ENCODE measurements at regions of chr18 and their contacts with region 1.

Region 1: DNA sequence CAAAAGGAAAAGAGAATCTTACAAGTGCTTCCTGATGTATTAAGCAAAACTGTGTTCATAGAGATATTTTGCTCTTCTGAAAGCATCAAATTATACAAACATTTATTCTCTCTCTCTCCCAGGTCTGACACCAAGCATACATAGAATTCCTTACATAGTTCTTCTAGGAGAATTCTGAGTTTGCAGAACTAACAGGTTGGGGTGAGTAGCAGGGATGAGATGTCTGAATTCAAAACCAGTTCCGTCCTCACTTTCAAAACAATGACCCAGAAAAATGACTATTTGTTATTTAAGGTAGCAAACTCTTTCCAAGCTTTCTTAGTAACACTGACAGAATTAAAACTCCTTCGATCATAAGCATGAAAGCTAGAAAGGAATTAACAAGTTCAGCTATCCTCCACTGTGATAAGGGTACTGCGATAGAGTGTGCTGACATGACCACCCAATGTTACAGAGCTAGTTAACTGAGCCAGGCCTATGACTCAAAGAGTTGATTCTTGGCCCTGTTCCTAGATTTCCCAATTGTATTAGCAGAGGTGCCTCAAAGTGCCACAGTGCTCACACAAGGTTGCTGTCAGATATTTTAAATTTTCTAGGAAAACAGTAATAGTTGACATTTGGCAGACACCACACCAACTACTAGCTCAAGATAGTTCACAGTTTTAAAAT is 85.8 kb upstream of the SETBP1 start:
- DNase-seq: no peak
- H3K4me3 ChIP-seq: no peak overlapping the region
- H3K27ac ChIP-seq: peak overlapping the region in 1 of 2 donors; percentile 52
- H3K4me1 ChIP-seq: peaks cover 4 to 59% of the 10 kb centered on the region in 2 donors
- H3K27me3 ChIP-seq: no peaks in the 10 kb centered on the region
- CTCF ChIP-seq: no peak

Region 2: DNA sequence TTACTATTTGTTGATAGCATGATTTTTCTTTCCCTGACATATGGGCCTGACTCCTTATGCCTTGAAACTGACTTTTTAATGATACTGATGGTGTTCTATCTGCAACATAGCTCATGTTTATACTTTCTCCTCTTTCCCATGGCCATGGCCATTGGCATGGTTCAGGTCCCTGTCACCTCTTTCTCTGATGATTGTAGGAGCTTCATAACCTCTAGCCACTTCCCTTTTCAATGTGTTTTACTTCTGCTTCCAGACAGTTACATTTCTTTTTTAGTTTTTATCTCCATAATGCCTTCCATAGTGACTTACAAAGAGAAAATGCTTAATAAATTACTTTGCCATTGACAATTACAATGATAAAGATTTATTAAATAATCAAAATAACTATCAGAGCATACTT is 92.1 kb before region 1 on chr18:
- intact Hi-C with region 1: no loop called
- DNase-seq: no peak
- H3K4me3 ChIP-seq: no peak overlapping the region
- H3K27ac ChIP-seq: no peak overlapping the region
- H3K4me1 ChIP-seq: no peaks in the 10 kb centered on the region
- H3K27me3 ChIP-seq: no peaks in the 10 kb centered on the region
- CTCF ChIP-seq: no peak

Region 3: GRCh38 chr18:44537521-44537920 is 57.4 kb before region 1 on chr18:
- intact Hi-C with region 1: loop called (anchors 5 kb)
- DNase-seq: peak in 1 of 2 donors; percentile 72
- H3K4me3 ChIP-seq: no peak overlapping the region
- H3K27ac ChIP-seq: no peak overlapping the region
- H3K4me1 ChIP-seq: peaks cover 0 to 6% of the 10 kb centered on the region in 2 donors
- H3K27me3 ChIP-seq: no peaks in the 10 kb centered on the region
- CTCF ChIP-seq: no peak

Region 4: DNA sequence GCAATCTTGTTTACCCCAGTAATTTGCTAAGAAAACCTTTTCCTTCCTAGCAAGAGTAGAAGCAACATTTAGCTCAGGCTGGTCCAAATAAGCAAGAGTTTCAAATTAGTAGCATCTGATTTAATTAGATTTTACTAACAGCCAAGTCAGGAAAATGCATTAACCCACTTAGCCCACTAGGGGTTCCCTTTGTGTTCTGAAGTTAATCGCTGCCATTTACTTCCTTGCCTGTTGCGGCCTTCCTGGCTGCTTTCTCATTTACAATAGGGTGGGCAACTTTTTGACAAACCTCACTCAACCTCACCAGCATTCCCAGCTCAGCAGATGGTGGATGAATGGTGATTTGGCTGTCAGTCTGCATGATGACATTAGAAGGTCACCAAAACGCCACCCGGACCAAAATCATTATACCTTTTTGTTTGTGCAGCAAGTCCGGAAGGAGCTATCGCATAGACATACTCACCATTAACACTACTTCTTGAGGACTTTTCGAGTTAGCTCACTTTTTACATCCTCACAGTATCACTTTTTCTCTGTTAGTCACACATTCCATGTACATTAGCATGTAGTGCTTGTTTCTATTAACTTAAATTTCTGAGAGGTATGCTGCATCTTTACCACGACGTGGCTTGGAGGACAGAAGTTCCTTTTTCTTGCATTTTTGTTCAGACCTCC is 15.8 kb before region 1 on chr18:
- intact Hi-C with region 1: loop called (anchors 1 kb)
- DNase-seq: no peak
- H3K4me3 ChIP-seq: no peak overlapping the region
- H3K27ac ChIP-seq: peak overlapping the region; percentile 60 to 61
- H3K4me1 ChIP-seq: peaks cover 6 to 15% of the 10 kb centered on the region in 2 donors
- H3K27me3 ChIP-seq: no peaks in the 10 kb centered on the region
- CTCF ChIP-seq: peak in 2 of 3 experiments; percentile 20 to 40

Region 5: DNA sequence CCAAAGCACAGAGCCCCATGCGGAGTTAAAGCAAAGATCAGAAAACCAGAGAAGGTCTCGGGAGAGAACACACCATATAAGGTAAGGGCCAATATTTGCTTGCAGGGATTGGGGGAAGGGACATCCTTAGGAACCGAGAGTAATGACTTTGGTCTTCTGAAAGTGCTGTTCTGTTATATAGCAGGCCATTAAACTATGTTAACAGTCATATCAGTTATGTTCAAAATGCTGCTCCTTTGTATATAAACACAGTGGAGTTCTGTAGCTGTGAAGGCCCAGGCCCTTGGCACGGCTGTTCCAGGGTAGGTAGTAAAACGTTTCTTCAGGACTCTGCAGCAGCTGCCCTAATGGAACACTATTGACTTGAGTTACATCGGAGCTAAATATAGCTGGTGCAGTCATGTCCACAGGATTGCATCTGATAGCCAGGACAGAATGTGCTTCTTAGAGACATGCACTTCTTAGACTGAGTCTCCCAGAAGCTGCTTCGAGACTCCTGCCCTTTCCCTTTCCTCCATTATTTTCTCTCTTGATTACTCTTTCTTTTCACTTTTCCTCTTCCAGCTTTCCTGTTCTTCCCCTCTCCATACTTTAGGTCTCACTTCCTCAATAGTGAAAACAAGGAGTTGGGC is 208.2 kb after region 1 on chr18:
- intact Hi-C with region 1: loop called (anchors 10 kb)
- DNase-seq: peak in 1 of 2 donors; percentile 86
- H3K4me3 ChIP-seq: peak overlapping the region in 1 of 2 donors; percentile 5
- H3K27ac ChIP-seq: peak overlapping the region; percentile 87 to 90
- H3K4me1 ChIP-seq: peaks cover 5 to 38% of the 10 kb centered on the region in 2 donors
- H3K27me3 ChIP-seq: no peaks in the 10 kb centered on the region
- CTCF ChIP-seq: no peak

Region 6: DNA sequence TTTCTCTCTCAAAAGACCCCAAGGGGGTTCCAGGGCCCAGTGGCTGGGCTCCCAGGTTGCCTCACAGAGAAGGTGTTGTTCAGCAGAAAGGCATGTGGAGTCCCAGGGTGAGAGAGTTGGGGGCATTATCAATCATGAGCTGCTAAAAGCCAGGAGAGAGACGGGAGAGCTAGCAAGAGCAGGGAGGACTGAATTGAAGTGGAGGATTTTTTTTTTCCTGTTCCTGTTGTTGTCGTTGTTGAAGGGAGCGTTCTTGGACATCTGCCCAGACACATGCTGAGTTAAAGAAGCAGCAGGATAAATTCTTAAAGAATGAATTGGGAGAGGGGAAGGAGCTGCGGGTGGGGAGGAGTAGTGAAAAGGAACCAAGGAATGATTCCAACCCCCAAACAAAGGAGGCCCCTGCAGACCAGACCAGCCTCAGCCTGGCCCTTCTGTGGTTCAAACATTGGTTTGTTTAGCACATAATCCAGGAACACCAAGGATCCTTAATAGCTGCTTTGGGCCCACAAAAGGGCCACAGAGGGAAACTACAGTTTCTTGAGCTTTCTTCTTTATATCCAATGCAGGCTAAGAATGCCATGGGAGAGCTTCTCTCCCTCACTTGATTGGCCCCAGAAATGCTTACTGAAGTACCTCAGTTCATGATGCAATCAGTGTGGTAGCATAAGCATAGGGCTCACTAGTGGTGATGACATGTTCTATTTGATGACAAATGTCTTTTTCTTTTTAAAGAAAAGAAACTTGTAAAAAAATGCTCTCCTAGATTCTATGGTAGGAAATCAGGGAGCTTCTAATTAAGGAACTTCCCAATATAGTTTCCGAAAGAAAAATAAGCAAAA is 231.7 kb after region 1 on chr18:
- intact Hi-C with region 1: loop called (anchors 10 kb)
- DNase-seq: peak; percentile 15 to 85
- H3K4me3 ChIP-seq: no peak overlapping the region
- H3K27ac ChIP-seq: peak overlapping the region; percentile 73 to 83
- H3K4me1 ChIP-seq: peaks cover 6 to 22% of the 10 kb centered on the region in 2 donors
- H3K27me3 ChIP-seq: no peaks in the 10 kb centered on the region
- CTCF ChIP-seq: no peak

Region 7: GRCh38 chr18:44927127-44927849 is 332.4 kb after region 1 on chr18:
- intact Hi-C with region 1: loop called (anchors 10 kb)
- DNase-seq: no peak
- H3K4me3 ChIP-seq: no peak overlapping the region
- H3K27ac ChIP-seq: no peak overlapping the region
- H3K4me1 ChIP-seq: peaks cover 0 to 7% of the 10 kb centered on the region in 2 donors
- H3K27me3 ChIP-seq: no peaks in the 10 kb centered on the region
- CTCF ChIP-seq: no peak

Region 8: DNA sequence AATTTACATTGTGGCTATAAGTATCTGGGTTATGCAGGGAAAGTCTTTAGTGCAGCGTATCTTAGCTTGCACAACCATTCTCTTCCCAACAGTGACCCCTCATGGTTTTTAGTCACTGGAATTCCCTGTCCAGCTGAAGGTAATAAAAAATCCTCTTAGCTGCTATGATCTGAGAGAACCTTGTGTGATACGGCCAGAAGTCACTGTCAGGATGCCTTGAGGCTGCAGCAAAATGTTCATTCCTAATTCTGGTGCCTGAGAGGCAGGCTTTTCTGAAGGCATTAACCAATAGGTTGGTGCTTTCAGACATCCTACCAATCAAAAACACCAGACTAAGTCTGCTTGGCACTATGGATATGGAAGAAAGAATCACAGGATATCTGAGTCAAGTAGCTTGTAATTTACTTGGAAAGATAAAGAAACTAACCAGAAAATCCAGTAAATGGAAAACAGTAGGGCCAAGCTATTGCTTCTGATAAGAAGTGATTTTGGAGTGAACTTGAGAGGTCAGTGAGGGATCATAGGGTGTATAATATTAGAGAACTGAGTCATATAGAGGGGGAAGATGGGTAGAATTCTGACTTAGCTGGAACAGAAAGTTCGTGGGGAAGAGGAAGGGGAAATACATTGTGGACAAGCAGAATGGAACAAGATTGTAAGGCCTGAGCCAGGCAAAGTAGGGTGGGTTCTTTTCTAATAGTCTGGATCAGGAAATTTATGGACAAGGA is 931.3 kb after region 1 on chr18:
- intact Hi-C with region 1: loop called (anchors 5 kb)
- DNase-seq: no peak
- H3K4me3 ChIP-seq: no peak overlapping the region
- H3K27ac ChIP-seq: peak overlapping the region; percentile 16 to 53
- H3K4me1 ChIP-seq: peaks cover 10 to 28% of the 10 kb centered on the region in 2 donors
- H3K27me3 ChIP-seq: no peaks in the 10 kb centered on the region
- CTCF ChIP-seq: peak in 1 of 3 experiments; percentile 36